Naive thymus-derived CD4-positive, alpha-beta T cell (primary cell): ENCODE measurements at regions of chr20 and their contacts with region 1.

Region 1: GRCh38 chr20:37615340-37616109 is 78.3 kb upstream of the CTNNBL1 start:
- DNase-seq: peak in 7 of 9 donors; percentile 3 to 46 (median 32)
- ATAC-seq: no peak
- H3K4me3 ChIP-seq: no peak overlapping the region
- H3K4me3 Mint-ChIP-seq: no peak overlapping the region
- H3K27ac ChIP-seq: no peak overlapping the region
- H3K27ac Mint-ChIP-seq: no peak overlapping the region
- H3K4me1 ChIP-seq: no peaks in the 10 kb centered on the region
- H3K4me1 Mint-ChIP-seq: no peaks in the 10 kb centered on the region
- H3K27me3 ChIP-seq: no peaks in the 10 kb centered on the region
- H3K27me3 Mint-ChIP-seq: peaks cover 9 to 49% (median 20%) of the 10 kb centered on the region in 5 donors

Region 2: DNA sequence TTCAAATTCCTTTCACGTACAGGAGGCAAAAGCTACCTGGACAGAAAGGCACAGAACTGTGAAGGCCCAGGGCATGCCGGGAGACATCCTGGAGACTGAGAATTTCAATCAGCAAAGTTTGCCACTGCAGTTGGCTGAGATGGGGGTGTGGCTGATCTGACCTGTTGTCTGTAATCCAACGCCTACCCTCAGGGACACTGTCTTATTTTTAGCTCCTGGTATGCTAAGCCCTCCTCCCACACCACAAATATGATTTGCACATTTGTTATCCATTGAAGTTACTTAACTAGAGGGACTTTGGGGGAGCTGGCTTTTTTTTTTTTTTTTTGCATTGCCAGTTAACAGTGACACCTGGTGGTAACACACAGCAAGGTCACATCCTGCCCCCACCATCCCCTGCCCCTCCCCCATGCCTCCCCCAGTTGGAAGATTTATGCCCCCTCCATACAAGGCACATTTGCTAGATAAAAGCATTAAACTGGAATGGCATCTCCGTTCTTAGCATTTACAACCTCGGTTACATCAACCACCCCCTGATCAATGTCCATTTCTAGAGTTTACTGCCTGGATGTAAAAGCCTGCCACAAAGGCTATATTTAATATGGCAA is 377.4 kb after region 1 on chr20:
- CTCF ChIA-PET with region 1: no interaction called
- POLR2A ChIA-PET with region 1: no interaction called
- intact Hi-C with region 1: loop called in 1 of 2 experiments (anchors 2 kb)
- DNase-seq: peak in 5 of 9 donors; percentile 2 to 20 (median 18)
- ATAC-seq: peak; percentile 42
- H3K4me3 ChIP-seq: no peak overlapping the region
- H3K4me3 Mint-ChIP-seq: no peak overlapping the region
- H3K27ac ChIP-seq: no peak overlapping the region
- H3K27ac Mint-ChIP-seq: peak overlapping the region in 2 of 9 donors; percentile 12 to 38
- H3K4me1 ChIP-seq: no peaks in the 10 kb centered on the region
- H3K4me1 Mint-ChIP-seq: peaks cover 0 to 32% (median 16%) of the 10 kb centered on the region in 7 donors
- H3K27me3 ChIP-seq: no peaks in the 10 kb centered on the region
- H3K27me3 Mint-ChIP-seq: no peaks in the 10 kb centered on the region